HCT116 (cell line): ENCODE measurements at regions of chr19 and their contacts with region 1.

Region 1: DNA sequence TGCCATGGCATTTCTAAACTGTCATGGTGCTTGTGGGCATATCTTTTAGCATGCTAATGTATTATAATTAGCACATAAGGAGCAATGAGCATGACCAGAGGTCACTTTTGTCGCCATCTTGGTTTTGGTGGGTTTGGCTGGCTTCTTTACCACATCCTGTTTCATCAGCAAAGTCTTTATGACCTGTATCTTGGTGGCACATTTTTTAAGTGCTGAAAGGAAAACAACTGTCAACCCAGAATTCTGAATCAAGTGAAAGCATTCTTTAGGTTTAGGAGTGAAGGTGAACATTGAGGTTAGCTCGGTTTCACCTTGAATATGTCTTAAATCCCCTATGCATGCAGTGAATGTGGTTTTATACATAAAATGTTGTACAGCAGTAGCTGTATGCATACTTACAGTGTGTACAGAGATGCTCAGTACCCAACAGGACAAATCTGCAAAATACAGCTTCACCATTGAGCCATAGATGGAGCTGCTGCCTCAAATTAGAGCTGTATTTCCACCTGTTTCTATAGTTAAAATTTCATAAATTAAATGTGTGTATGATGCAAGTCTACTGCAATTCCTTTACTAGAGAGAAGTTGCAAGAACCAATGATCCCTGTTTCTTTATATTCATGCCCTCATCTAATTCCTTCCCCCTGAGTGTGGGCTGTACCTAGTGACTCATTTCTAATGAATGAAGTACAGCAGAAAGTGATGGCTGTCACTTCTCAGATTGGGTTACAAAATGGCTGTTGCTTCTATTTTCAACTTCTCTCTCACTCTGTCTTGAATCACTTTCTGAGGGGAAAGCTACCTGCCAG is 25.2 kb upstream of the IGSF23 start:
- DNase-seq: peak; percentile 78
- ATAC-seq: peak; percentile 89
- H3K4me3 ChIP-seq: peak overlapping the region; percentile 37 to 50
- H3K27ac ChIP-seq: peak overlapping the region; percentile 66
- H3K4me1 ChIP-seq: peaks cover 18 to 51% of the 10 kb centered on the region in 2 experiments
- H3K27me3 ChIP-seq: no peaks in the 10 kb centered on the region
- CTCF ChIP-seq: peak in 2 of 3 experiments; percentile 27 to 35; a peak in 1 of 6 replicates
- POLR2A ChIP-seq: no peak
- RAD21 ChIP-seq: peak; percentile 62

Region 2: DNA sequence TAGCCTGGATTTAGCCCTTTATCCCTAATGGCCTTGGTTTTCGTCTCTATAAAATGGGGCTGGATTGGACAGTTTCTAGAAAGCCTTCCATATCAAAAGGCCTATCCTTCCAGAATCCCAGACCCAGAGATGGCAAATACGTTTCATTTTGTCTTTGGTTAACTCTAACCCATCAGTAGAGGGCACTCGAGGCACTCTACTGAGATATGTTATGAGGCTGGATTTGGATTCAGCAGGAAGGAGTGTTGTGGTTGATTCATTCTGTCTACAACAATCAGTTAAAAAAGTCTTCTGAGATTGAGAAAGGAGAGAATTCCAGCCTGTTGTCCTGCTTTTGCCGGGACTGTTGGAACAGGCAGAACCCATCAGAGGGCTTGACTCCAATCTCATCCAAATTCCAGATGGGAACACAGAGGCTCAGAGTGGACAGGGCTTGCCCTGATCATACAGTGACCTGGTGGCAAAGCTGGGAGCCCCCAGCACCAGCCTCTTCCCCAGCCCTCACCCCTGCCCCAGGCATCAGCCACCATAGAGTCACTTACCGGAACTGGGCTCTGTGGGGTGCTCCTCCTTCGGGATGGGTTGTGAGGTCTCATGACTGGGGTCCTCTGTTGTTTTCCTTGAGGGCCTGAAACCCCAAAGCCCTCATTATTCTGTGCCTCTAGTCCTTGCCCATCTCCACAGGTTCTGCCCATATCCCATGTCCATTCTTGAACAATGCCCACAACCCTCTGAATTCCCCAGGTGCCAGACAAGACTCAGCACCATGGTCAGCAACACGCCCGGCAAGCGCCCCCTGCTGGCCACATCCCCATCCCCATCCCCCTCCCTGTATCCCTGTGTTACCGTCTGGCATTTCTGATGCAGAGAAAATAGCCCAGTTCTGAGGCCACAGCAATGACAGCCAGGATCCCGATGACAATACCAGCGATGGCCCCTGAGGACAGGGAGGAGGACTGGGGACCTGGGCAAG is 75.6 kb before region 1 on chr19:
- CTCF ChIA-PET with region 1: no interaction called
- POLR2A ChIA-PET with region 1: no interaction called
- RAD21 ChIA-PET with region 1: no interaction called
- intact Hi-C with region 1: no loop called
- DNase-seq: peak; percentile 24
- ATAC-seq: peak; percentile 90
- H3K4me3 ChIP-seq: no peak overlapping the region
- H3K27ac ChIP-seq: no peak overlapping the region
- H3K4me1 ChIP-seq: no peaks in the 10 kb centered on the region
- H3K27me3 ChIP-seq: no peaks in the 10 kb centered on the region
- CTCF ChIP-seq: peak; percentile 50 to 82 (median 81); a peak in 5 of 6 replicates
- POLR2A ChIP-seq: no peak
- RAD21 ChIP-seq: peak; percentile 52

Region 3: DNA sequence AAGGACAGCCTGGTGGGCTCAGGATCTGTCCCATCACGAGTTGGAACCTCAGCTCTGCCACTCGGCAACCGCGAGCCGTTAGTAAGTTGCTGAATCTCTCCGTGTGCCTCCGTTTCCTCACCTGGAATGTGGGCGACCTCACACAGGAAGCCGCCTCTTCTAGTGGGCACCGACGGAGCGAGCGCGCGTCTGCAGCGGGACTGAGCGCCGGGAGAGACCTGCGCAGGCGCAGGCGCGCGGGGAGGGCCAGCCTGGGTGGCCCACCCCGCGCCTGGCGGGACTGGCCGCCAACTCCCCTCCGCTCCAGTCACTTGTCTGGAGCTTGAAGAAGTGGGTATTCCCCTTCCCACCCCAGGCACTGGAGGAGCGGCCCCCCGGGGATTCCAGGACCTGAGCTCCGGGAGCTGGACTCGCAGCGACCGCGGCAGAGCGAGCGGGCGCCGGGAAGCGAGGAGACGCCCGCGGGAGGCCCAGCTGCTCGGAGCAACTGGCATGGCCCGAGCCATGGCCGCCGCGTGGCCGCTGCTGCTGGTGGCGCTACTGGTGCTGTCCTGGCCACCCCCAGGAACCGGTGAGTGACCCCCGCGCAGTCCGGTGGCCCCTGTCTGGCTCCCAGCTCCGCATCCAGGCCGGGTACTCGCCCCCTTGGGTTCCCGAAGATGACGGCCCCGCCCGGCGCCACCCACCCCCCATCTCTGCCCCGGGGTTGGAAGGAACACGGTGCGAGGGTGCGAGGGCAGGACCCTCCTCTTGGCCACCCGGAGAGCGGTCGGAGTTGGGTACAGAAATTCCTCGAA is 55.6 kb after region 1 on chr19 and contains the start of gene PVR:
- CTCF ChIA-PET with region 1: no interaction called
- POLR2A ChIA-PET with region 1: interaction called, 16 read pairs
- RAD21 ChIA-PET with region 1: no interaction called
- intact Hi-C with region 1: loop called (anchors 5 kb)
- DNase-seq: no peak
- ATAC-seq: peak; percentile 91
- H3K4me3 ChIP-seq: peak within 1 kb of the TSS; percentile 82 to 91
- H3K27ac ChIP-seq: peak within 1 kb of the TSS; percentile 98
- H3K4me1 ChIP-seq: peaks cover 4 to 13% of the 10 kb centered on the region in 2 experiments; a peak in 3 of 4 replicates
- H3K27me3 ChIP-seq: no peaks in the 10 kb centered on the region
- CTCF ChIP-seq: no peak
- POLR2A ChIP-seq: no peak
- RAD21 ChIP-seq: no peak
- total RNA-seq, gene PVR: 62.0 TPM